Activated CD8-positive, alpha-beta T cell treated with anti-CD3 and anti-CD28 coated beads for 36 hours (primary cell): ENCODE measurements at regions of chr10 and their contacts with region 1.

Region 1: GRCh38 chr10:33193057-33193700 is 141.3 kb downstream of the NRP1 start:
- DNase-seq: peak; percentile 85
- ATAC-seq: peak; percentile 82
- H3K4me3 Mint-ChIP-seq: no peak overlapping the region
- H3K27ac Mint-ChIP-seq: no peak overlapping the region
- H3K4me1 Mint-ChIP-seq: no peaks in the 10 kb centered on the region
- H3K27me3 Mint-ChIP-seq: peaks cover 5% of the 10 kb centered on the region
- CTCF ChIP-seq: peak; percentile 82

Region 2: GRCh38 chr10:33032654-33033151 is 160.5 kb before region 1 on chr10:
- CTCF ChIA-PET with region 1: no interaction called
- POLR2A ChIA-PET with region 1: no interaction called
- intact Hi-C with region 1: no loop called
- DNase-seq: no peak
- ATAC-seq: no peak
- H3K4me3 Mint-ChIP-seq: no peak overlapping the region
- H3K27ac Mint-ChIP-seq: no peak overlapping the region
- H3K4me1 Mint-ChIP-seq: peaks cover 9% of the 10 kb centered on the region
- H3K27me3 Mint-ChIP-seq: no peaks in the 10 kb centered on the region
- CTCF ChIP-seq: no peak

Region 3: GRCh38 chr10:33134011-33134751 is 59.0 kb before region 1 on chr10:
- CTCF ChIA-PET with region 1: no interaction called
- POLR2A ChIA-PET with region 1: no interaction called
- intact Hi-C with region 1: no loop called
- DNase-seq: peak; percentile 92
- ATAC-seq: peak; percentile 74
- H3K4me3 Mint-ChIP-seq: peak overlapping the region; percentile 10
- H3K27ac Mint-ChIP-seq: peak overlapping the region; percentile 92
- H3K4me1 Mint-ChIP-seq: peaks cover 69% of the 10 kb centered on the region
- H3K27me3 Mint-ChIP-seq: peaks cover 1% of the 10 kb centered on the region
- CTCF ChIP-seq: no peak

Region 4: GRCh38 chr10:33204049-33204448 is 10.9 kb after region 1 on chr10:
- CTCF ChIA-PET with region 1: interaction called, 29 read pairs
- POLR2A ChIA-PET with region 1: interaction called, 3 read pairs
- intact Hi-C with region 1: no loop called
- DNase-seq: no peak
- ATAC-seq: no peak
- H3K4me3 Mint-ChIP-seq: no peak overlapping the region
- H3K27ac Mint-ChIP-seq: no peak overlapping the region
- H3K4me1 Mint-ChIP-seq: no peaks in the 10 kb centered on the region
- H3K27me3 Mint-ChIP-seq: no peaks in the 10 kb centered on the region
- CTCF ChIP-seq: no peak

Region 5: GRCh38 chr10:33211106-33211878 is 18.1 kb after region 1 on chr10:
- CTCF ChIA-PET with region 1: interaction called, 16 read pairs
- POLR2A ChIA-PET with region 1: no interaction called
- intact Hi-C with region 1: no loop called
- DNase-seq: peak; percentile 40
- ATAC-seq: peak; percentile 73
- H3K4me3 Mint-ChIP-seq: no peak overlapping the region
- H3K27ac Mint-ChIP-seq: peak overlapping the region; percentile 64
- H3K4me1 Mint-ChIP-seq: peaks cover 12% of the 10 kb centered on the region
- H3K27me3 Mint-ChIP-seq: no peaks in the 10 kb centered on the region
- CTCF ChIP-seq: no peak

Region 6: GRCh38 chr10:33330543-33331378 is 137.6 kb after region 1 on chr10:
- CTCF ChIA-PET with region 1: interaction called, 27 read pairs
- POLR2A ChIA-PET with region 1: no interaction called
- intact Hi-C with region 1: loop called (anchors 5 kb)
- DNase-seq: peak; percentile 86
- ATAC-seq: peak; percentile 48
- H3K4me3 Mint-ChIP-seq: no peak overlapping the region
- H3K27ac Mint-ChIP-seq: no peak overlapping the region
- H3K4me1 Mint-ChIP-seq: peaks cover 16% of the 10 kb centered on the region
- H3K27me3 Mint-ChIP-seq: peaks cover 64% of the 10 kb centered on the region
- CTCF ChIP-seq: peak; percentile 92